ENCODE measurements at regions of chr1 and their contacts with region 1.

Region 1: GRCh38 chr1:150944856-150945255 is 18.7 kb downstream of the SETDB1 start:
- DNase-seq: no peak
- ATAC-seq: no peak
- H3K4me3 ChIP-seq: no peak overlapping the region
- H3K4me3 Mint-ChIP-seq: no peak overlapping the region
- H3K27ac ChIP-seq: no peak overlapping the region
- H3K27ac Mint-ChIP-seq: no peak overlapping the region
- H3K4me1 ChIP-seq: no peaks in the 10 kb centered on the region
- H3K4me1 Mint-ChIP-seq: no peaks in the 10 kb centered on the region
- H3K27me3 ChIP-seq: no peaks in the 10 kb centered on the region
- H3K27me3 Mint-ChIP-seq: no peaks in the 10 kb centered on the region

Region 2: GRCh38 chr1:150957666-150958065 is 12.8 kb after region 1 on chr1:
- CTCF ChIA-PET with region 1: no interaction called
- POLR2A ChIA-PET with region 1: interaction called in 1 of 2 experiments, 12 read pairs
- DNase-seq: no peak
- ATAC-seq: no peak
- H3K4me3 ChIP-seq: no peak overlapping the region
- H3K4me3 Mint-ChIP-seq: no peak overlapping the region
- H3K27ac ChIP-seq: no peak overlapping the region
- H3K27ac Mint-ChIP-seq: no peak overlapping the region
- H3K4me1 ChIP-seq: no peaks in the 10 kb centered on the region
- H3K4me1 Mint-ChIP-seq: peaks cover 0 to 4% (median 0%) of the 10 kb centered on the region in 3 donors
- H3K27me3 ChIP-seq: no peaks in the 10 kb centered on the region
- H3K27me3 Mint-ChIP-seq: no peaks in the 10 kb centered on the region

Measured in T-cell (primary cell).